Right ventricle myocardium inferior (tissue), 1 donor: ENCODE measurements at regions of chr13 and their contacts with region 1.

Region 1: DNA sequence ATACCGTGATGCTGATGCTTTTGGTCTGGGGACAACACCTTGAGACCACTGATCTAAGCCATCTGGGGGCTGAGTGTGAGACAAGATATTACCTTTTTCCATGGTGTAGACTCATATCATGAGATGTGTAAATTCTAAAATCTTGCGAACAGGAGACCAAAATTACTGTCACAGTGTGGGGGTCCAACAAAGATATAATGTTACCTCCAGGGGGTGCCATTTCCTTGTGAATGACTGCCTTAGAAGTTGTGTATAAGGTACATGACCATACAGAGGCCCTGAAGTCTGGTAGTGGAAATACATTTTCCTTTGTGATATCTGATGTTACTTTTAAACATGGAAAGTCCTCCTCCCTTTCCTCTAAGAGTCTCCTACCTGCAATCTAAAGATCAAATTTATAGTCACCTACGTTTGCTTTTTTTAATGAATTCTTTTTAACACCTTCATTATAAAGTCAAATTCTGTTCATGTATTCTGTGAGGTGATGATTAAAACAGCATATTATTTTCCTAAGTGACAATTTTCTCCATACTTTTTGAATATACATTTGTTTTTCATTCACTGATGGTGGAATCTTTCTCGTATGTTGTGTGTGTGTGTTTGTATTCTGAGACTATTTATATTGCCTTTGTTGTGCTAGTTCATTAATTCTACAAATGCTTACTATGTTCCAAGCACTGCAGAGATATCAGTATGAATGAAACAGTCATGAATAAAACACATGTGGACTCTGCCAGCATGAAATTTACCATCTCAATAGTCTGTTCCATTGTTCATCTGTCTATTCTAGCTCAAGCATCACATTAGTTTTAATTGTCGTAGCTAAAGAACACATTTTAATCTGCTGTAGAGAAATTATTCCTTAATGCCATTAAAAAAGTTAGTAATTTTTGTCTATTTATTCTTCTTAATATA is 113.7 kb downstream of the RFC3 start:
- DNase-seq: no peak
- ATAC-seq: peak; percentile 65

Region 2: DNA sequence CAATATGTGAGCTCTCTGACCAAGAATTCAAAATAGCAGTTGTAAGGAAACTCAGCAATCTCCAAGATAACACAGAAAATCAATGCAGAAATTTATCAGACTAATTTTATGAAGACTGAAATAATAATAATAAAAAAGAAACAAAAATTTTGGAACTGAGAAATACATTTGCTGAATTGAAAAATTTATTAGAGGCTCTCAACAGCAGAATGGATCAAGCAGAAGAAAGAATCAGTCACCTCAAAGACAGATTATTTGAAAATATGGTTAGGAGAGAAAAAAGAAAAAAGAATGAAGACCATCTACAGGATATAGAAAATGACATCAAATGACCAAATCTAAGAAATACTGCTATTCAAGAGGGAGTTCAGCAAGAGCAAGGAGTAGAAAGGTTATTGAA is 38.1 kb before region 1 on chr13:
- intact Hi-C with region 1: no loop called
- DNase-seq: no peak
- ATAC-seq: no peak

Region 3: DNA sequence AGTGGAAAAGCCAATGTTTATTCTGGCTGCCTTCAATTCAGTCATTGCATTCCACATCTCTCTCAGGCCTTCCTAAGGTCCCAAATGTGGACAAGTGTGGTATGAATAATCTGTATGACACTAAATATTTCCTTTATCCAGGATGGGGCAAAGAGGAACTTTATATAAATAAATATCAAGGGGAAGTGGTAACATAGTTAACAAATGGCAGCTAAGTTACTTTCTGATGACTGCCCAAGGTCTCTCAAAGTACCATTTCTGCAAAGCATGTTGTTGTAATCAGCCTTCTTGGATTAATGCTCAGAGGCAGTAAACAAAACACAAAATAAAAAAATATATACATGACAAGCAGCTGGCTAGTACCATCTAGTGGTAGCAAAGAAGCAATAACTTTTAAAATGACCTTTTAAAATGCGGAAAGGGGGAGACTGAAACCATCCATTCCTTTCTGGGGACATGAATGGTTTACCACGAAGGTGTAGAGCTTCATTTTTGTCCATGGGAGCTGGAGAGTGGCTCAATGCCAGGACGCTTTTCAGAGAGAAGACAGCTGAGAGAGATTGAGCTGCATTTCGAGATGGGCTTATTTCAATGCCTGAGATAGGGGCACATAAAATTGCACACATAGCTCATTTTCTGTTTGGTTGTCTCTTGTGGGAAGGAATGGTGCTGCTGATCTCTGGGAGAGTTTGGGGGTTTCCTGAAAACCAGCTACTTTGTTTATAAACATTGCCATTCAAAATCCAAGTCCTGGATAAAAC is 145.5 kb after region 1 on chr13:
- intact Hi-C with region 1: loop called (anchors 2 kb)
- DNase-seq: no peak
- ATAC-seq: no peak

Region 4: DNA sequence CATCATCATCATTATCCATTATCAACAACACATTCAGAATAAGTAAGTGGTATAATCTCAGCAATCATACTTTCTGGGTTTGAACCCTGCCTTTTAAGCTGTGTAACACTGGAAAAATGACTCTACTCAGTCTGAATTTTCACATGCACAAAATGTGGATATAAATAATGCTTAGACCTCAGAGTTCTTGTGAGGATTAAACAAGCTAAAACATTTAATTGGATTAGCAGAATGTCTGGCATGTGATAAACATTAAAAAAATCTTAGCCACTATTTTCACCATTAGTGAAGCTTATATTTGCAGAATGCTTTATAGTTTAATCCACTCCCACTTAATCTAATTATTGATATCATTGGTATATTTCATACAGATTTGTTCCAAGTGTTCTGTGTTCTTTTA is 298.6 kb after region 1 on chr13:
- intact Hi-C with region 1: no loop called
- DNase-seq: no peak
- ATAC-seq: no peak

Region 5: GRCh38 chr13:35157143-35157755 is 1225.6 kb after region 1 on chr13:
- intact Hi-C with region 1: loop called (anchors 2 kb)
- DNase-seq: no peak
- ATAC-seq: no peak